ENCODE measurements at regions of chr1 and their contacts with region 1.

Region 1: DNA sequence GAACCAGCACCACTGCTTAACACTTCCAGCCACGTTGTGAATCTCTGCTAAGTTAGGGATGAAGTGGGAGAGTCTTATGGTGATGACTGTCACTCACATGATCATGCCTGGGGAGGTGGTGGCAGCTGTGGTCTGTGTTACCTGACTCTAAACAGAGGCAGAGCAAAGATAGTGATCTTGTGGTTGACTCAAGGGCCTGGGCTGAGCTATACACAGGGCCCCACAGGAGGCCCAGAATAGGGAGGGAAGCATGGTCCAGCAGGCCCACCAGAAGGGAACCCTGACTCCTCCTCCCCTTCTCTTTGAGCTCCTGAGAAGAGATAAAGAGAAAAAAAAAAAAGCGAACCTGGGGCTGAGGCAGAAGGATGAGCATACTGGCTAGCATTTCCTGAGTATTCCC is 55.0 kb downstream of the PLXNA2 start:
- DNase-seq: no peak

Region 2: GRCh38 chr1:208007938-208008342 is 181.2 kb before region 1 on chr1:
- intact Hi-C with region 1: no loop called
- DNase-seq: peak in 1 of 10 donors; percentile 13

Region 3: GRCh38 chr1:208238710-208239472 is 49.7 kb after region 1 on chr1:
- intact Hi-C with region 1: loop called (anchors 5 kb)
- DNase-seq: no peak

Measured in posterior cingulate gyrus (tissue), 11 donors.